Activated B cell treated with CpG ODN at 0.5 μM for 24 hours (primary cell): ENCODE measurements at regions of chr7 and their contacts with region 1.

Region 1: GRCh38 chr7:35823440-35823839 is 22.6 kb downstream of the SEPTIN7 start:
- DNase-seq: no peak
- ATAC-seq: no peak
- H3K4me3 Mint-ChIP-seq: no peak overlapping the region
- H3K27ac Mint-ChIP-seq: peak overlapping the region; percentile 0
- H3K4me1 Mint-ChIP-seq: peaks cover 47% of the 10 kb centered on the region
- H3K27me3 Mint-ChIP-seq: no peaks in the 10 kb centered on the region
- CTCF ChIP-seq: no peak

Region 2: GRCh38 chr7:35808815-35809214 is 14.6 kb before region 1 on chr7:
- CTCF ChIA-PET with region 1: no interaction called
- POLR2A ChIA-PET with region 1: no interaction called
- intact Hi-C with region 1: loop called (anchors 2 kb)
- DNase-seq: no peak
- ATAC-seq: no peak
- H3K4me3 Mint-ChIP-seq: no peak overlapping the region
- H3K27ac Mint-ChIP-seq: no peak overlapping the region
- H3K4me1 Mint-ChIP-seq: peaks cover 77% of the 10 kb centered on the region
- H3K27me3 Mint-ChIP-seq: no peaks in the 10 kb centered on the region
- CTCF ChIP-seq: no peak